RWPE1 (cell line): ENCODE measurements at regions of chr5 and their contacts with region 1.

Region 1: GRCh38 chr5:151115274-151115905 is 34.6 kb upstream of the TNIP1 start:
- DNase-seq: peak; percentile 87
- H3K27ac ChIP-seq: no peak overlapping the region
- CTCF ChIP-seq: peak; percentile 98

Region 2: GRCh38 chr5:151002250-151002649 is 113.1 kb before region 1 on chr5:
- CTCF ChIA-PET with region 1: interaction called, 55 read pairs
- POLR2A ChIA-PET with region 1: no interaction called
- DNase-seq: peak; percentile 82
- H3K27ac ChIP-seq: no peak overlapping the region
- CTCF ChIP-seq: peak; percentile 70

Region 3: DNA sequence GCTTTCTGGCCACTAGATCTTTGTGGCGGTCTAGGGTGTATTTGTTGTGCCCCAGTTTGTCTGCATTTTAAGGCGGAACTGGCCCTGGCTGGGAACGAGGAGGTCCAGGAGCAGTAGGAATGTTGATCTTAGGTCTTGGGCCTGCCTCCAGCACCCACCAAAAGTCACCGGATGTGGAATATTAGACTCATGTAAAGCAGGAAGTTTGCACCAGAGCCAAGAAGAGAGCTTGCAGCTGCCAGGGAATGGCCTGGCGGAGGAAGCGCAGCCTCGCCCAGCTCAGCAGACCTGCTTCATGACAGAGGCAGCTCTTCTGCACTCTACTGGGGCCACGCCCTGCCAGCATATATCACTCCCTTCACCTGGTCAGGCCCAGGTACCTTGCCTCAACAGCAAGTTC is 91.7 kb before region 1 on chr5:
- CTCF ChIA-PET with region 1: interaction called, 11 read pairs
- POLR2A ChIA-PET with region 1: no interaction called
- DNase-seq: peak; percentile 85
- H3K27ac ChIP-seq: peak overlapping the region; percentile 83
- CTCF ChIP-seq: no peak

Region 4: GRCh38 chr5:151037561-151038411 is 77.6 kb before region 1 on chr5:
- CTCF ChIA-PET with region 1: interaction called, 13 read pairs
- POLR2A ChIA-PET with region 1: no interaction called
- DNase-seq: no peak
- H3K27ac ChIP-seq: 0 out of 2 replicates have a peak overlapping the region, but pooled peaks have one; percentile 1
- CTCF ChIP-seq: no peak

Region 5: GRCh38 chr5:151097786-151098498 is 17.4 kb before region 1 on chr5:
- CTCF ChIA-PET with region 1: interaction called, 10 read pairs
- POLR2A ChIA-PET with region 1: no interaction called
- DNase-seq: no peak
- H3K27ac ChIP-seq: no peak overlapping the region
- CTCF ChIP-seq: no peak

Region 6: GRCh38 chr5:151202381-151203139 is 87.2 kb after region 1 on chr5:
- CTCF ChIA-PET with region 1: no interaction called
- POLR2A ChIA-PET with region 1: no interaction called
- DNase-seq: peak; percentile 93
- H3K27ac ChIP-seq: no peak overlapping the region
- CTCF ChIP-seq: no peak